CD8-positive, alpha-beta memory T cell (primary cell): ENCODE measurements at regions of chr1 and their contacts with region 1.

Region 1: GRCh38 chr1:203340112-203340804 is 10.7 kb downstream of the FMOD start:
- DNase-seq: peak; percentile 28 to 72 (median 55)
- H3K4me3 ChIP-seq: no peak overlapping the region
- H3K4me3 Mint-ChIP-seq: no peak overlapping the region
- H3K27ac ChIP-seq: no peak overlapping the region
- H3K27ac Mint-ChIP-seq: peak overlapping the region in 6 of 8 donors; percentile 4 to 69 (median 48)
- H3K4me1 ChIP-seq: peaks cover 18% of the 10 kb centered on the region
- H3K4me1 Mint-ChIP-seq: peaks cover 26 to 44% (median 34%) of the 10 kb centered on the region in 3 donors
- H3K27me3 ChIP-seq: peaks cover 6% of the 10 kb centered on the region
- H3K27me3 Mint-ChIP-seq: peaks cover 20 to 44% of the 10 kb centered on the region in 2 donors

Region 2: DNA sequence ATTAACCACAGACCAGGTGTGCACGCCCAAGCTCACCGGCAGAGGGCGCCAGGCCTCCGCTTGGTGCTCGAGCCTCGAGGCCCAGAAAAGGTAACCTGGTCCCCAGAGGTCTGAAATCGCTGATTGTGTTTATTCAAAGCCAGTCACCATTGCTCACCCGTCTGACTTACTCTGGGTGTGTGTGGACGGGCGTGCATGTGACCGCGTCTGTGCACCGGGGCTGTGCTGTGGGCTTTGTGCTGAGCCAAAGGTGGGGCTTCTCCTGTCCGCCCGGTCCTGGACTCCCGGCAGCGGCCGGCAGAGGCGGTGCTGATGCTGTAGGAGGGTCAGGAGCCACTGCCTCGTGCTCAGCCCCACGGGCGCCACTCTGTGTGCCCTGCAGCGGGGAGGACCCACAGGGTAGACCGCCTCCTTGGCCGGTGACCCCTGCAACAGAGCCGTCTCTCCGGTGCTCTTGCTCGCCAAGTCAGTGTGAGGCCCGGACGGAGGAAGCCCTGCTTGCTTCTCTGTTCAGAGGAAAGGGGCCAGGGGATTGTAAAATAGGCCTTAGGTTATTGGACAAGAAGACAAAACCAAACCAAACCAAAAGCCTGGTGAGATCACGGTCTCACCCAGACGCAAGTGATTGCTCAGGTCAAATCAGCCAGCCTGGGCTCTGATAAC is 66.9 kb before region 1 on chr1:
- CTCF ChIA-PET with region 1: interaction called, 775 read pairs
- POLR2A ChIA-PET with region 1: interaction called, 7 read pairs
- DNase-seq: peak; percentile 86 to 93 (median 88)
- H3K4me3 ChIP-seq: peak overlapping the region; percentile 17
- H3K4me3 Mint-ChIP-seq: peak overlapping the region in 6 of 7 donors; percentile 40 to 74 (median 54)
- H3K27ac ChIP-seq: no peak overlapping the region
- H3K27ac Mint-ChIP-seq: peak overlapping the region in 7 of 8 donors; percentile 38 to 91 (median 80)
- H3K4me1 ChIP-seq: peaks cover 69% of the 10 kb centered on the region
- H3K4me1 Mint-ChIP-seq: peaks cover 32 to 54% (median 40%) of the 10 kb centered on the region in 3 donors
- H3K27me3 ChIP-seq: no peaks in the 10 kb centered on the region
- H3K27me3 Mint-ChIP-seq: no peaks in the 10 kb centered on the region

Region 3: DNA sequence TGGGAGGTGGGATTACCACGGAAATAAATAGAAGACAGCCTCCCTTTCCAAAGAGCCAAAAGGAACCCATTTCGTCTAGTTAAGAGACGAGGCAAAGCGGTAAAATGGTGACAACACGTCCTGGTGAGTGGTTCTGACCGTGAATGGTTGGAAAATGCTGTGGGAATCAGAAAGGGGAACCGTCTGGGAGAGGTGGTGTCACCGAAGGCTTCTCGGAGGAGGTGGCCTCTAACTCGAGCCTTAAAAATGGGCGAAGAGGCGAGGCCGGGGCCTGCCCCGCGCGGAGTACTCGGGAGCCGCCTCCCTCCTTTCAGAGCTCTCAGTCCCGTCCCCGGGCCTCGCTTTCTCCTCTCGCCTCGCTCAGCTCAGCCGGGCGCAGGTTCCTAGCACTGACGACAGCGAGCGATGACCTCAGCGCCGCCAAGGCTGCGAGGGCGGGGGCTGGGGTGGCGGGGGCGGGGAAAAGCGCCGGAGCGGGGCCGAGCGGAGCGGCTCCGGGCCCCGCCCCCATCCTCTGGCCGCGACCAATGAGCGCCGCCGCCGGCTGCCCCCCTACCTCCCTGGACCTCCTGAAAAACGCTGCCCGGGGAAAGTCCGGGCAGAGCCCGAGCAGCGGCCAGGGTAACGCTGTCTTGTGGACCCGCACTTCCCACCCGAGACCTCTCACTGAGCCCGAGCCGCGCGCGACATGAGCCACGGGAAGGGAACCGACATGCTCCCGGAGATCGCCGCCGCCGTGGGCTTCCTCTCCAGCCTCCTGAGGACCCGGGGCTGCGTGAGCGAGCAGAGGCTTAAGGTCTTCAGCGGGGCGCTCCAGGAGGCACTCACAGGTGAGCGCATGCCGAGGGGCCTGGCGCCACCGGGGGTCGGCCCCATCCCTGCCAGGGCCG is 35.1 kb before region 1 on chr1 and contains the start of gene BTG2:
- CTCF ChIA-PET with region 1: interaction called, 90 read pairs
- POLR2A ChIA-PET with region 1: interaction called, 10 read pairs
- DNase-seq: peak; percentile 89 to 95 (median 90)
- H3K4me3 ChIP-seq: peak within 1 kb of the TSS; percentile 92
- H3K4me3 Mint-ChIP-seq: peak within 1 kb of the TSS; percentile 92 to 99 (median 98)
- H3K27ac ChIP-seq: peak within 1 kb of the TSS; percentile 98
- H3K27ac Mint-ChIP-seq: peak within 1 kb of the TSS; percentile 98 to 100 (median 99)
- H3K4me1 ChIP-seq: peaks cover 40% of the 10 kb centered on the region
- H3K4me1 Mint-ChIP-seq: peaks cover 57 to 65% (median 59%) of the 10 kb centered on the region in 3 donors
- H3K27me3 ChIP-seq: no peaks in the 10 kb centered on the region
- H3K27me3 Mint-ChIP-seq: peaks cover 0 to 14% of the 10 kb centered on the region in 2 donors
- total RNA-seq, gene BTG2: 97.8 to 102 TPM

Region 4: GRCh38 chr1:203311368-203312301 is 28.6 kb before region 1 on chr1:
- CTCF ChIA-PET with region 1: interaction called, 90 read pairs
- POLR2A ChIA-PET with region 1: interaction called, 10 read pairs
- DNase-seq: no peak
- H3K4me3 ChIP-seq: no peak overlapping the region
- H3K4me3 Mint-ChIP-seq: peak overlapping the region in 2 of 7 donors; percentile 17 to 51
- H3K27ac ChIP-seq: no peak overlapping the region
- H3K27ac Mint-ChIP-seq: peak overlapping the region; percentile 31 to 99 (median 74)
- H3K4me1 ChIP-seq: peaks cover 46% of the 10 kb centered on the region
- H3K4me1 Mint-ChIP-seq: peaks cover 53 to 65% (median 60%) of the 10 kb centered on the region in 3 donors
- H3K27me3 ChIP-seq: no peaks in the 10 kb centered on the region
- H3K27me3 Mint-ChIP-seq: peaks cover 0 to 6% of the 10 kb centered on the region in 2 donors

Region 5: GRCh38 chr1:203326830-203327683 is 13.2 kb before region 1 on chr1:
- CTCF ChIA-PET with region 1: interaction called, 166 read pairs
- POLR2A ChIA-PET with region 1: interaction called, 16 read pairs
- DNase-seq: peak; percentile 91 to 97 (median 95)
- H3K4me3 ChIP-seq: peak overlapping the region; percentile 78
- H3K4me3 Mint-ChIP-seq: peak overlapping the region; percentile 77 to 90 (median 80)
- H3K27ac ChIP-seq: peak overlapping the region; percentile 90
- H3K27ac Mint-ChIP-seq: peak overlapping the region; percentile 93 to 99 (median 98)
- H3K4me1 ChIP-seq: peaks cover 63% of the 10 kb centered on the region
- H3K4me1 Mint-ChIP-seq: peaks cover 65 to 68% (median 66%) of the 10 kb centered on the region in 3 donors
- H3K27me3 ChIP-seq: no peaks in the 10 kb centered on the region
- H3K27me3 Mint-ChIP-seq: peaks cover 0 to 3% of the 10 kb centered on the region in 2 donors

Region 6: GRCh38 chr1:203351037-203352013 is 11.1 kb after region 1 on chr1 and contains the start of gene FMOD:
- CTCF ChIA-PET with region 1: interaction called, 11 read pairs
- POLR2A ChIA-PET with region 1: no interaction called
- DNase-seq: no peak
- H3K4me3 ChIP-seq: no peak within 1 kb of the TSS
- H3K4me3 Mint-ChIP-seq: no peak within 1 kb of the TSS
- H3K27ac ChIP-seq: no peak within 1 kb of the TSS
- H3K27ac Mint-ChIP-seq: no peak within 1 kb of the TSS
- H3K4me1 ChIP-seq: no peaks in the 10 kb centered on the region
- H3K4me1 Mint-ChIP-seq: peaks cover 0 to 3% (median 0%) of the 10 kb centered on the region in 3 donors
- H3K27me3 ChIP-seq: peaks cover 19% of the 10 kb centered on the region
- H3K27me3 Mint-ChIP-seq: peaks cover 32 to 79% of the 10 kb centered on the region in 2 donors
- total RNA-seq, gene FMOD: 0.51 to 1.2 TPM

Region 7: DNA sequence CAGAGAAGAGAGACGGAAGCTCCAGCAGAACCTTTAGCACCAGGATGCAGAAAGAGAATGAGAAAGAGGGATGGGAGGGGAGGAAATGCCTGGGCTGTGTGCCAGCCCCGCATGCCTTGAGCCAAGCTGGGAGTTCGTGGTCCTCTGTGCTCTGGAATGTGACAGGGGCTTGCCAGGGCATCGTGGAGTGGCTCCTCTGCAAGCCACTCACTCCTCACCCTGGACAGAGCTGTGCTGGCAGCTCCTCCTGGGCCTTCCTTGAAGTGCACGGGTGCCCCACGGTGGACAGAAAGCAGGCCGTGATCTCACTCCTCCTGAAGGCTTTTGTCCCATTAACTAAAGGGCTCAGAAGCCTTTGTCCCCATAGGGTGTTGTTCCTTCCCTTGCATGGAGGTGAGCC is 100.5 kb after region 1 on chr1:
- CTCF ChIA-PET with region 1: no interaction called
- POLR2A ChIA-PET with region 1: no interaction called
- DNase-seq: peak in 1 of 5 donors; percentile 1
- H3K4me3 ChIP-seq: no peak overlapping the region
- H3K4me3 Mint-ChIP-seq: no peak overlapping the region
- H3K27ac ChIP-seq: no peak overlapping the region
- H3K27ac Mint-ChIP-seq: no peak overlapping the region
- H3K4me1 ChIP-seq: no peaks in the 10 kb centered on the region
- H3K4me1 Mint-ChIP-seq: no peaks in the 10 kb centered on the region
- H3K27me3 ChIP-seq: no peaks in the 10 kb centered on the region
- H3K27me3 Mint-ChIP-seq: peaks cover 7 to 33% of the 10 kb centered on the region in 2 donors

Region 8: DNA sequence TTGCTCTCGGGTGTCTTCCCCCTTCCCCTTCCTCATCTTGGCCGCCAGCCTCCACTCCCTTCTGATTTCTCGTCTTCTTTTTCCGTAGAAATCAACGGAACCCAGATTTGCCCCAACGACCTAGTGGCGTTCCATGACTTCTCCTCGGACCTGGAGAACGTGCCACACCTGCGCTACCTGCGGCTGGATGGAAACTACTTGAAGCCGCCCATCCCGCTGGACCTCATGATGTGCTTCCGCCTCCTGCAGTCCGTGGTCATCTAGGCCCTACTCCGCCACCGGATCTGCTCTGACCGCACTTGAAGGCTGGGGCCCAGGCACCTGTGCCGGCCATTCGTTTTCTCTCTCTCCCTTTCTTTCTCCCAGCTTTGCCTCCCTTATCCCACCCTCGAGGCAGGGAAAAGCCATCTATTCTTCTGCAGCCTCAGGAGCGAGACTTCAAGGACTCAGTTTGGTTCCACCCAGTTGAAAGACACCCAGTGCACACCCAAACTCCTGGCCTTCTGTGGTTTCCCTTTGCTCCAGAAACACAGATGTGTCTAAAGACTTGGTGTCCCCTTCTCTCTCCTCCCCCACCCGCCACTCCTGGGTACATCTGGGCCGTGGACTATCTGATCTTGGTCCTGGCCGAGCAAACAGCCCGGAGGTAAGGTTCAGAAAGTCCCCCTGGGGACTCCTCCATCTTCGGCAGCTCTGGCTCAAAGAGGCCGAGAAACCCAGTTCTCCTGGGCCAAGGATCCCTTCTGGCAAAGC is 146.5 kb after region 1 on chr1:
- CTCF ChIA-PET with region 1: interaction called, 48 read pairs
- POLR2A ChIA-PET with region 1: no interaction called
- DNase-seq: no peak
- H3K4me3 ChIP-seq: no peak overlapping the region
- H3K4me3 Mint-ChIP-seq: peak overlapping the region in 6 of 7 donors; percentile 79 to 89 (median 83)
- H3K27ac ChIP-seq: no peak overlapping the region
- H3K27ac Mint-ChIP-seq: peak overlapping the region in 2 of 8 donors; percentile 70 to 91
- H3K4me1 ChIP-seq: peaks cover 9% of the 10 kb centered on the region
- H3K4me1 Mint-ChIP-seq: peaks cover 0 to 12% (median 8%) of the 10 kb centered on the region in 3 donors
- H3K27me3 ChIP-seq: no peaks in the 10 kb centered on the region
- H3K27me3 Mint-ChIP-seq: peaks cover 3 to 7% of the 10 kb centered on the region in 2 donors

Region 9: DNA sequence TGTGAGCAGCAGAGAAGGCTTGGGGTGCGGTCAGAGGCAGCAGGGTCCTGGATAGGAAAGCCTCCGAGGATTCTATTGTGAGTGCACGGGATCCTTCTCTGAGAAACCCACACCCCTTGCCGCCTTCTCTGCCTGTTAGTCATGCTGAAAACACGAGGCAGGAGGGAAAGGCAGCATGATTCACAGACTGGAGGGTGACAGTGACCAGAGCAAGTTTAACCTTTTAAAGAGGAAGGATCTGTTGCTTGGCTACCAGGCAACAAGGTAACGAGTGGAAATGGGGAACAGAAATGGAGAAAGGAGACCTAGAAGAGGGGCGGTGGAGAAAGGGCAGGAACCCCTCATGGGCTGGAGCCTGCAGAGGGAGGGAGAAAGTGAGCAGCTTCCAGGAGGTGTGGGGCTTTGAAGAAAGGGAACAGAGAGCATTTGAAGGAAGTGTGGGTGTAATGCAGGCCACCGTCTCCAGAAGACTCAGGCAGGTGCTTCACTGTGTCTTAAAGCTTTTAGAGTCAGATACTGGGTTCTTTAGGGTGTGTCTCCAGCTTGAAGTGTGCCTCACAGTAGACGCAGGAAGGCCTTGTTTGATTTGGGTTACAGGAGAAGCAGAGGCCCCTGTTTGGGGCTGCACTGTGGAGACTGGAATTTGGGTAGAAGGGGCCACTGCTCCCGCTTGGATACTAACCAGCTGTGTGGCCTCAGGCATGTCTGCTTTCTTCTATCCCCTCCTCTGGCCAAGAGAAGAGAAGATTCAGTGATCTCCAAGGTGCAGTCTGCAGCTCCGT is 172.8 kb after region 1 on chr1:
- CTCF ChIA-PET with region 1: no interaction called
- POLR2A ChIA-PET with region 1: no interaction called
- DNase-seq: peak in 1 of 5 donors; percentile 38
- H3K4me3 ChIP-seq: no peak overlapping the region
- H3K4me3 Mint-ChIP-seq: no peak overlapping the region
- H3K27ac ChIP-seq: no peak overlapping the region
- H3K27ac Mint-ChIP-seq: no peak overlapping the region
- H3K4me1 ChIP-seq: peaks cover 21% of the 10 kb centered on the region
- H3K4me1 Mint-ChIP-seq: peaks cover 0 to 1% (median 0%) of the 10 kb centered on the region in 3 donors
- H3K27me3 ChIP-seq: no peaks in the 10 kb centered on the region
- H3K27me3 Mint-ChIP-seq: peaks cover 8 to 15% of the 10 kb centered on the region in 2 donors